OCI-LY7 (cell line): ENCODE measurements at regions of chr7 and their contacts with region 1.

Region 1: GRCh38 chr7:148712678-148713329 is 14.1 kb downstream of the CUL1 start:
- DNase-seq: peak; percentile 23
- H3K4me3 ChIP-seq: no peak overlapping the region
- H3K27ac ChIP-seq: peak overlapping the region; percentile 43
- H3K4me1 ChIP-seq: peaks cover 64% of the 10 kb centered on the region
- CTCF ChIP-seq: no peak

Region 2: GRCh38 chr7:148527707-148528168 is 185.1 kb before region 1 on chr7:
- CTCF ChIA-PET with region 1: no interaction called
- POLR2A ChIA-PET with region 1: no interaction called
- intact Hi-C with region 1: no loop called
- DNase-seq: peak; percentile 81
- H3K4me3 ChIP-seq: no peak overlapping the region
- H3K27ac ChIP-seq: no peak overlapping the region
- H3K4me1 ChIP-seq: no peaks in the 10 kb centered on the region
- CTCF ChIP-seq: peak; percentile 92

Region 3: DNA sequence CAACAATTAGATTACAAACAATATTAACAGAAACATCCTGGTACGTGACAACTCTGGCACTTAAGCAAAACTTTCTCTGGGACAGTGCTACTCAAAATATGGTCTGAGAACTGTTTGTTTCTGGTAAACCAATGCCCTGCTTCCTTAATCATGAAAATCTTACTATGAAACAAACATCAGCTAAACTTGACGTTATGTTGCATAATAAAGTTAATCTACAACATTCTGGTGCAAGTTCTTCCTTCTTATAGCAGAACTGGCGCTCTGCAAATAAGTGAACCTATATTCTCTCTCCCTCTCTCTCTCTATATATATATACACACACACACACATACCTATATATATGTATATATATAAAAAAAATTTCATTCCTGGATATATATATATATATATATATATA is 114.5 kb before region 1 on chr7:
- CTCF ChIA-PET with region 1: no interaction called
- POLR2A ChIA-PET with region 1: interaction called, 10 read pairs
- intact Hi-C with region 1: no loop called
- DNase-seq: no peak
- H3K4me3 ChIP-seq: no peak overlapping the region
- H3K27ac ChIP-seq: no peak overlapping the region
- H3K4me1 ChIP-seq: no peaks in the 10 kb centered on the region
- CTCF ChIP-seq: no peak

Region 4: GRCh38 chr7:148698397-148699023 is 14.3 kb before region 1 on chr7 and contains the start of gene CUL1:
- CTCF ChIA-PET with region 1: no interaction called
- POLR2A ChIA-PET with region 1: interaction called, 36 read pairs
- intact Hi-C with region 1: loop called (anchors 2 kb)
- DNase-seq: peak; percentile 84
- H3K4me3 ChIP-seq: peak within 1 kb of the TSS; percentile 83
- H3K27ac ChIP-seq: peak within 1 kb of the TSS; percentile 69
- H3K4me1 ChIP-seq: peaks cover 32% of the 10 kb centered on the region
- CTCF ChIP-seq: no peak
- total RNA-seq, gene CUL1: 36.7 and 40.5 TPM in 2 replicates

Region 5: DNA sequence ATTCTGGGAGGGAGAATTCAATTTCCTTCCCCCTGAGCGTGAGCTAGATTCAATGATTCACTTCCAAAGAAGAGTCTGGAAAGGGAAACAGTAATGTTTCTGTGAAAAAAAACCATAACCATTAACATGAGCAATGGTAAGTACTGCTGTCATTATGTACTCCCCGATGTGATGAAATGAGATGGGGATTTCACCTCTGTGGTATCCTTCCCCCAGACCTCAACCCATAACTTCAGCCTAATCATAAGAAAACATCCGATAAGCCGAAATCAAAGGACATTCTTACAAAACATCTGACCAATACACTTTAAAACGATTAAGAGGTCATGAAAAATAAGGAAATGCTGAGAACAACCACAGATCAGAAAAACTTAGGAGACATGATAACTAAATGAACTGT is 144.1 kb after region 1 on chr7:
- CTCF ChIA-PET with region 1: interaction called, 15 read pairs
- POLR2A ChIA-PET with region 1: no interaction called
- intact Hi-C with region 1: no loop called
- DNase-seq: no peak
- H3K4me3 ChIP-seq: no peak overlapping the region
- H3K27ac ChIP-seq: no peak overlapping the region
- H3K4me1 ChIP-seq: peaks cover 16% of the 10 kb centered on the region
- CTCF ChIP-seq: no peak

Region 6: GRCh38 chr7:148877517-148877916 is 164.7 kb after region 1 on chr7:
- CTCF ChIA-PET with region 1: no interaction called
- POLR2A ChIA-PET with region 1: no interaction called
- intact Hi-C with region 1: no loop called
- DNase-seq: no peak
- H3K4me3 ChIP-seq: no peak overlapping the region
- H3K27ac ChIP-seq: no peak overlapping the region
- H3K4me1 ChIP-seq: peaks cover 50% of the 10 kb centered on the region
- CTCF ChIP-seq: no peak

Region 7: GRCh38 chr7:150368096-150368883 is 1655.5 kb after region 1 on chr7 and contains the start of gene REPIN1:
- CTCF ChIA-PET with region 1: no interaction called
- POLR2A ChIA-PET with region 1: no interaction called
- intact Hi-C with region 1: loop called (anchors 5 kb)
- DNase-seq: peak; percentile 80
- H3K4me3 ChIP-seq: peak within 1 kb of the TSS; percentile 87
- H3K27ac ChIP-seq: peak within 1 kb of the TSS; percentile 39
- H3K4me1 ChIP-seq: peaks cover 68% of the 10 kb centered on the region
- CTCF ChIP-seq: no peak
- total RNA-seq, gene REPIN1: 36.9 and 46.2 TPM in 2 replicates